ENCODE measurements at regions of chr17 and their contacts with region 1.

Region 1: GRCh38 chr17:28916302-28916934 is 13.5 kb upstream of the DHRS13 start:
- DNase-seq: peak in 5 of 10 donors; percentile 40 to 65 (median 58)
- H3K4me3 ChIP-seq: no peak overlapping the region
- H3K27ac ChIP-seq: peak overlapping the region in 15 of 59 donors; percentile 2 to 58 (median 38)
- H3K27me3 ChIP-seq: no peaks in the 10 kb centered on the region
- CTCF ChIP-seq: peak; percentile 53 to 84 (median 77)

Region 2: GRCh38 chr17:28755486-28755885 is 160.9 kb before region 1 on chr17:
- intact Hi-C with region 1: loop called in 1 of 2 experiments (anchors 5 kb)
- DNase-seq: peak in 2 of 10 donors; percentile 0 to 18
- H3K4me3 ChIP-seq: no peak overlapping the region
- H3K27ac ChIP-seq: no peak overlapping the region
- H3K27me3 ChIP-seq: no peaks in the 10 kb centered on the region
- CTCF ChIP-seq: no peak

Region 3: GRCh38 chr17:29168079-29168758 is 251.8 kb after region 1 on chr17:
- intact Hi-C with region 1: no loop called
- DNase-seq: peak in 1 of 10 donors; percentile 7
- H3K4me3 ChIP-seq: no peak overlapping the region
- H3K27ac ChIP-seq: peak overlapping the region in 25 of 59 donors; percentile 1 to 62 (median 36)
- H3K27me3 ChIP-seq: no peaks in the 10 kb centered on the region
- CTCF ChIP-seq: no peak

Region 4: GRCh38 chr17:29331075-29331707 is 414.8 kb after region 1 on chr17:
- intact Hi-C with region 1: no loop called
- DNase-seq: no peak
- H3K4me3 ChIP-seq: no peak overlapping the region
- H3K27ac ChIP-seq: peak overlapping the region in 14 of 59 donors; percentile 3 to 69 (median 32)
- H3K27me3 ChIP-seq: no peaks in the 10 kb centered on the region
- CTCF ChIP-seq: no peak